ENCODE measurements at regions of chr12 and their contacts with region 1.

Region 1: DNA sequence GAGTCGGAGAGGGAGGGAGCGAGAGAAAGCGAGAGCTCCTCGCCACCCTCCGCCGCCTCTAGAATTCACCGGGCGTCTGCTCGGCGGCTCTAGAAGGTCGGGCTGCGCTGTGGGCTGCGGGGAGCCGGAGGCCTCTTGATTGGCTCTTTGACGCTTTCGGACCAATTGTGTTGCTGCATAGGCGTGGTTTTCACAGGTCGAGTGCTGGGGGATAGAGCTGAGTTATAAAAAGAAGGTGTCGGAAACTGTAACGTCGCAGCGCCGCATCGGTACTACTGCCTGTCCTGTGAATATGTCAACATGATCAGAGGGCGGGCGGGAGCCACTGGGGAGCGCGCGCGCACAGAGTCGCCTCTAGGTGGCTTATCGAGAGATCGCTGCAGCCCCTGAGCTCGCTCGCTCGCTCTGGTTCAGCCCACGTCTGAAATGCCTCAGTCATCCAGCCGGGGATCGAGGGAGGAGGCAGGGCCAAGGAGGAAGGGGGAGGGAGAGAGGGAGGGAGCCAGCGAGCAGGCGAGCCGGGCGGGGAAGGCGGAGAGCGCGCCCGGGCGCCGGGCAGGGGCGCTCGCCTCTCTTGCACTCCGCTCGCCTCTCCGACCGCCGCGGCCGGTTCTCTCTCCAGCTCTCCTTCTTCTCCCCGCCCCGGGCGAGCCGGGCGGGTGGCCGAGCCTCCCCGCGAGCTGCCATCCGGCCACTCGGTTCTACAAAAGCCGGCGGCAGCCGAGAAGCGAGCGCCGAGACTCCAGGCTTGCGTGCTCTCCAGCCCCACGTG is at the start of gene TBX3:
- DNase-seq: peak; percentile 97 to 100
- ATAC-seq: peak; percentile 88 to 92
- H3K4me3 ChIP-seq: peak within 1 kb of the TSS; percentile 57
- H3K27ac ChIP-seq: peak within 1 kb of the TSS; percentile 96 to 100
- H3K4me1 ChIP-seq: peaks cover 15% of the 10 kb centered on the region
- CTCF ChIP-seq: peak; percentile 58
- EP300 ChIP-seq: no peak
- POLR2A ChIP-seq: peak; percentile 91
- RAD21 ChIP-seq: peak; percentile 50 to 77
- polyA plus RNA-seq, gene TBX3: 23.7 and 28.0 TPM in 2 replicates

Region 2: DNA sequence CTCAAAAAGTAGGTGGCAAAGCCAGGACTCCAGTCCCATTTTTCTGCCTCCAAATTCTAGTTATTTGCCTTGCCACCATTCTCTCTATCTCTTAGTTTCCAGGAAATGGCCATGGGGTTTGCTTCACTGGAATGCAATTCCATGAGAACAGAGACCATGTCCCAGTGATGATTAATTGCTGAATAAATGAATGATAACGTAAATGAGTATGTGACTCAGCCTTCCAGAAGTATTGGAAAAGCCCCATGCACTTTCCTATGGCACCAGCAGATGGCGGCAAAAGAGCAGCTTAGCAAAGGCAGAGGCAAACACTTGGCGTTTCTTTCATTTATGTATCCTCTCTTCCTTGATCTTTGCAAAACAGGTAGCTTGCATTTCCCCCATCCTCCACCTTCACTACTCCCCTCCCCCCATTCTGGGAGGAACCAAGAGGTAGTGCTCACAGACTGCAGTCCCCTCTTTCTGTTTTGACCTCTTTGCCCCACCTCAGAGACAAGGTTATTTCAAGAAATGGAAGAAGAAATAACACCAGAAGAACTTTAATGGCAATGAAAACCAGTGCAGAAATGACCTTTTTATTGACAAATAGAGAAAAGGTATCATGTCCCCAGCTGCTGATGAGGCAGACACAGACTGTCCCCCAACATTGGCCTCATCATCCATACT is 21.6 kb before region 1 on chr12:
- CTCF ChIA-PET with region 1: interaction called, 13 read pairs
- POLR2A ChIA-PET with region 1: interaction called, 19 read pairs
- DNase-seq: peak; percentile 76 to 90
- ATAC-seq: peak; percentile 73 to 79
- H3K4me3 ChIP-seq: no peak overlapping the region
- H3K27ac ChIP-seq: peak overlapping the region; percentile 83 to 85
- H3K4me1 ChIP-seq: peaks cover 38% of the 10 kb centered on the region
- CTCF ChIP-seq: peak; percentile 95
- EP300 ChIP-seq: peak; percentile 52 to 54; a peak in 3 of 5 replicates
- POLR2A ChIP-seq: no peak
- RAD21 ChIP-seq: peak; percentile 97 to 99

Region 3: GRCh38 chr12:114704096-114704495 is 19.8 kb after region 1 on chr12:
- CTCF ChIA-PET with region 1: interaction called, 7 read pairs
- POLR2A ChIA-PET with region 1: interaction called, 10 read pairs
- DNase-seq: no peak
- ATAC-seq: peak in 1 of 2 experiments; percentile 37; a peak in 3 of 6 replicates
- H3K4me3 ChIP-seq: no peak overlapping the region
- H3K27ac ChIP-seq: peak overlapping the region in 1 of 2 experiments; percentile 3; a peak in 1 of 6 replicates
- H3K4me1 ChIP-seq: peaks cover 14% of the 10 kb centered on the region; the same call in 2 of the 3 replicates
- CTCF ChIP-seq: no peak
- EP300 ChIP-seq: no peak
- POLR2A ChIP-seq: no peak
- RAD21 ChIP-seq: no peak

Region 4: GRCh38 chr12:115166698-115167315 is 482.5 kb after region 1 on chr12:
- CTCF ChIA-PET with region 1: interaction called, 7 read pairs
- POLR2A ChIA-PET with region 1: interaction called, 14 read pairs
- DNase-seq: peak in 1 of 2 experiments; percentile 20
- ATAC-seq: peak in 1 of 2 experiments; percentile 58; a peak in 2 of 6 replicates
- H3K4me3 ChIP-seq: no peak overlapping the region
- H3K27ac ChIP-seq: no peak overlapping the region
- H3K4me1 ChIP-seq: no peaks in the 10 kb centered on the region
- CTCF ChIP-seq: no peak; the same call in 2 of the 3 replicates
- EP300 ChIP-seq: no peak
- POLR2A ChIP-seq: no peak
- RAD21 ChIP-seq: peak; percentile 55 to 60; a peak in 4 of 5 replicates

Region 5: DNA sequence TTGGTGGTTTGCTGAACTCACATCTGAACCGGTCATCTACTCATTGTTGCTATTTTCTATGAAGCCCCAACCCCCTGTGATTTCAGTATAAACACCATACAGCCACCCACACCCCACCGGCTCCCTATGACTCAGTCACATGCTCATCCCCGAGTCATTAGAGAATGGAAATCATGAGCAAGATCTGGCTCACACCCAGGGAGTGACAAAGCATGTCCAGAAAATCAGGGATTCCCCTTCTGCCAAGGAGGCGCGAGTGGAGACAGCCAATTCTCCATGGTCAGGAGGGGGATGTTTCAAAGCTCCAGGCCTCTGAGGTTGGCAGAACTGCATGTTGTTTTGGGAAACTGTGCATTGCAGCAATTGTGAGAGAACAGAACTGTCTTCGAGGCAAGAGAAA is 657.2 kb after region 1 on chr12:
- CTCF ChIA-PET with region 1: interaction called, 11 read pairs
- POLR2A ChIA-PET with region 1: interaction called, 3 read pairs
- DNase-seq: peak; percentile 86 to 90
- ATAC-seq: peak; percentile 80 to 83
- H3K4me3 ChIP-seq: no peak overlapping the region
- H3K27ac ChIP-seq: peak overlapping the region; percentile 45 to 75
- H3K4me1 ChIP-seq: peaks cover 34% of the 10 kb centered on the region
- CTCF ChIP-seq: no peak
- EP300 ChIP-seq: peak; percentile 64 to 71; a peak in 2 of 5 replicates
- POLR2A ChIP-seq: no peak
- RAD21 ChIP-seq: peak in 1 of 2 experiments; percentile 30; a peak in 4 of 5 replicates

Region 6: GRCh38 chr12:115570069-115570777 is 885.9 kb after region 1 on chr12:
- CTCF ChIA-PET with region 1: no interaction called
- POLR2A ChIA-PET with region 1: interaction called, 14 read pairs
- DNase-seq: peak; percentile 69 to 76
- ATAC-seq: peak; percentile 93 to 95
- H3K4me3 ChIP-seq: peak overlapping the region; percentile 25
- H3K27ac ChIP-seq: peak overlapping the region; percentile 49 to 81
- H3K4me1 ChIP-seq: peaks cover 9% of the 10 kb centered on the region
- CTCF ChIP-seq: no peak
- EP300 ChIP-seq: no peak
- POLR2A ChIP-seq: no peak
- RAD21 ChIP-seq: peak in 1 of 2 experiments; percentile 30; a peak in 1 of 5 replicates

Measured in A549 (cell line).